ENCODE measurements at regions of chr1 and their contacts with region 1.

Region 1: GRCh38 chr1:159580340-159580739 is 7.3 kb upstream of the APCS start:
- DNase-seq: no peak
- H3K4me3 Mint-ChIP-seq: no peak overlapping the region
- H3K27ac Mint-ChIP-seq: no peak overlapping the region
- H3K4me1 Mint-ChIP-seq: no peaks in the 10 kb centered on the region
- H3K27me3 Mint-ChIP-seq: no peaks in the 10 kb centered on the region
- CTCF ChIP-seq: no peak

Region 2: DNA sequence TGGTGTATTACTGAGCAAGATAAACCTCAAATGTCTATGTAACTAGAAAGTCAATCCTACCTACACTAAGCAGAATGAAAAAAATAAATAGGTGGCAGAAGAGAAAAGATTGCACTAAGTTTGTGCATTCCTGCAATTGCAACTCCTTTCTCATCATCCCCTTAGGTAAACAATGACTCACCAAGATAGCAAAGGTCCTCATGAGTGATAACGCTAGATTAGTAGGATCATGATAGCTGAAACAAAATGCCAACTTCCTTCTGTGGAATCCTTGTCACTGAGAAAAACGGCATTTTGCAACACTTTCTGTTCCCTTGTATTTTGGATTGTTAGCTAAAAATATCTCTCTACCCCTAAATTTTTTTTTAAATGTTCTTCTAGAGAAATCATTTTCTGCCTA is 298.2 kb before region 1 on chr1:
- CTCF ChIA-PET with region 1: no interaction called
- intact Hi-C with region 1: no loop called
- DNase-seq: no peak
- H3K4me3 Mint-ChIP-seq: no peak overlapping the region
- H3K27ac Mint-ChIP-seq: no peak overlapping the region
- H3K4me1 Mint-ChIP-seq: no peaks in the 10 kb centered on the region
- H3K27me3 Mint-ChIP-seq: peaks cover 12% of the 10 kb centered on the region
- CTCF ChIP-seq: no peak

Region 3: DNA sequence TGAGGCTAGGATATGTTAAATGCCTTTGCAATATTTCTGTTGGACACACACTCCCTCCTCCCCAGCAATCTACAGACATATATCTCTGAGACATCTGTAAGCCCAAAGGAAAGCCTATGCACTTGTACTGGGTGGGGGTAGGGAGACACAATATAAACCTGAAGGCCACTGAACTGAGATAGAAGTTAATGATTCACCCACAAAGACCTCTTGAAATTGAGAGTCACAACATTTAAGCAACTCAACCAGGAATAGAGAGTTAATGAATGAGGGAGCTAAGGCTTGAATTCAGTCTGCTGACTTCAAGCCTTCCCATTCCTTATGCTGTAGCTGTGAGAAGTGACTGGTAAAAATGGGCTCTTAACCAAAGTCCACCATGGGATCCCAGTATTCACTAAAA is 135.8 kb before region 1 on chr1:
- CTCF ChIA-PET with region 1: interaction called, 11 read pairs
- intact Hi-C with region 1: no loop called
- DNase-seq: no peak
- H3K4me3 Mint-ChIP-seq: no peak overlapping the region
- H3K27ac Mint-ChIP-seq: no peak overlapping the region
- H3K4me1 Mint-ChIP-seq: no peaks in the 10 kb centered on the region
- H3K27me3 Mint-ChIP-seq: no peaks in the 10 kb centered on the region
- CTCF ChIP-seq: no peak

Region 4: GRCh38 chr1:159510229-159510541 is 70.2 kb before region 1 on chr1:
- CTCF ChIA-PET with region 1: no interaction called
- intact Hi-C with region 1: no loop called
- DNase-seq: no peak
- H3K4me3 Mint-ChIP-seq: no peak overlapping the region
- H3K27ac Mint-ChIP-seq: peak overlapping the region; percentile 82
- H3K4me1 Mint-ChIP-seq: peaks cover 22% of the 10 kb centered on the region
- H3K27me3 Mint-ChIP-seq: no peaks in the 10 kb centered on the region
- CTCF ChIP-seq: no peak

Region 5: DNA sequence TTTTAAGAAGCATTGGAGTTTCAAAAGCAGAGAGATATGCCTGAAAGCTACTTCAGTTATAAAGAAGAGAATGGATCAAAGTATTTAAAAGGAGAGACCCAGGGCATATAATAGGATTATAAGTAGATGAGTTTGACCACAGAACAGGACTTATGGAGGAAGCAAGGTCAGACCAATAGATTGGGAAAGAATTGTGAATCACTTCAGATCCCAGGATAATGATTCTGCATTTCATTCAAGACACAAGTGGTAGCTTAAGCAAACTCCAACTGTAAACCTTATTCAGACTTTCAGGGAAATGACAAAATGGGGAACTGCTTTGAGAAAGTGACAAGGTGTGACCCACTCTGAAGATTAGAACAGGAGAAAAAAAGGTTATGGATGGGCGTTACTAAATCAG is 25.6 kb before region 1 on chr1:
- CTCF ChIA-PET with region 1: no interaction called
- intact Hi-C with region 1: loop called (anchors 2 kb)
- DNase-seq: no peak
- H3K4me3 Mint-ChIP-seq: no peak overlapping the region
- H3K27ac Mint-ChIP-seq: no peak overlapping the region
- H3K4me1 Mint-ChIP-seq: peaks cover 20% of the 10 kb centered on the region
- H3K27me3 Mint-ChIP-seq: no peaks in the 10 kb centered on the region
- CTCF ChIP-seq: no peak

Region 6: DNA sequence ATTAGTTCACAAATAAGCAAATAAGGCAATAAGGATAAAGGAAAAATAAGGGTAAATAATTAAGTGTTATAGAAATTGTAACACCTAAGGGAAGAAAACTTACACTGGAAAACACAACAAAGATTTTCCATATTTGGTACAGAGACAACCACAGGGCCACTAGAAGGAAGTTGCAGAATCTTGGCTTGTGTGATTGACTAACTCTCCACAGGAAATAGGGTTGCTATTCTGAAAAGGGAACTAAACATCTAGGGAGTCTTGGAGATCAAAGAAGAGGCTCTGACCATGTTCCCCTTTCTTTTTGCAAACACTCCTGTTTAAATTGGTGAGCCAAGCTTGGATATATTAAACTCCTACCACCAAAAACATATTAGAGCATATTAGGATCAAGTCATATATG is 66.3 kb after region 1 on chr1:
- CTCF ChIA-PET with region 1: no interaction called
- intact Hi-C with region 1: no loop called
- DNase-seq: no peak
- H3K4me3 Mint-ChIP-seq: no peak overlapping the region
- H3K27ac Mint-ChIP-seq: no peak overlapping the region
- H3K4me1 Mint-ChIP-seq: no peaks in the 10 kb centered on the region
- H3K27me3 Mint-ChIP-seq: no peaks in the 10 kb centered on the region
- CTCF ChIP-seq: no peak